T-cell (primary cell): ENCODE measurements at regions of chr1 and their contacts with region 1.

Region 1: GRCh38 chr1:54406339-54407153 is at the start of gene SSBP3:
- DNase-seq: peak; percentile 84 to 96 (median 90)
- ATAC-seq: peak; percentile 93 to 96 (median 95)
- H3K4me3 ChIP-seq: peak within 1 kb of the TSS; percentile 76 to 87
- H3K4me3 Mint-ChIP-seq: peak within 1 kb of the TSS; percentile 90 to 92 (median 91)
- H3K27ac ChIP-seq: peak within 1 kb of the TSS; percentile 70
- H3K27ac Mint-ChIP-seq: peak within 1 kb of the TSS; percentile 86 to 97
- H3K4me1 ChIP-seq: peaks cover 29 to 70% of the 10 kb centered on the region in 2 experiments
- H3K4me1 Mint-ChIP-seq: peaks cover 59 to 72% (median 70%) of the 10 kb centered on the region in 3 donors
- H3K27me3 ChIP-seq: no peaks in the 10 kb centered on the region
- H3K27me3 Mint-ChIP-seq: no peaks in the 10 kb centered on the region
- total RNA-seq, gene SSBP3: 51.5 to 84.5 (median 69.2) TPM

Region 2: GRCh38 chr1:53716150-53716549 is 690.4 kb before region 1 on chr1:
- CTCF ChIA-PET with region 1: interaction called in 1 of 2 experiments, 11 read pairs
- POLR2A ChIA-PET with region 1: no interaction called
- DNase-seq: no peak
- ATAC-seq: no peak
- H3K4me3 ChIP-seq: no peak overlapping the region
- H3K4me3 Mint-ChIP-seq: no peak overlapping the region
- H3K27ac ChIP-seq: no peak overlapping the region
- H3K27ac Mint-ChIP-seq: no peak overlapping the region
- H3K4me1 ChIP-seq: no peaks in the 10 kb centered on the region
- H3K4me1 Mint-ChIP-seq: no peaks in the 10 kb centered on the region
- H3K27me3 ChIP-seq: peaks cover 0 to 31% of the 10 kb centered on the region in 2 experiments
- H3K27me3 Mint-ChIP-seq: peaks cover 8 to 9% of the 10 kb centered on the region in 2 donors

Region 3: DNA sequence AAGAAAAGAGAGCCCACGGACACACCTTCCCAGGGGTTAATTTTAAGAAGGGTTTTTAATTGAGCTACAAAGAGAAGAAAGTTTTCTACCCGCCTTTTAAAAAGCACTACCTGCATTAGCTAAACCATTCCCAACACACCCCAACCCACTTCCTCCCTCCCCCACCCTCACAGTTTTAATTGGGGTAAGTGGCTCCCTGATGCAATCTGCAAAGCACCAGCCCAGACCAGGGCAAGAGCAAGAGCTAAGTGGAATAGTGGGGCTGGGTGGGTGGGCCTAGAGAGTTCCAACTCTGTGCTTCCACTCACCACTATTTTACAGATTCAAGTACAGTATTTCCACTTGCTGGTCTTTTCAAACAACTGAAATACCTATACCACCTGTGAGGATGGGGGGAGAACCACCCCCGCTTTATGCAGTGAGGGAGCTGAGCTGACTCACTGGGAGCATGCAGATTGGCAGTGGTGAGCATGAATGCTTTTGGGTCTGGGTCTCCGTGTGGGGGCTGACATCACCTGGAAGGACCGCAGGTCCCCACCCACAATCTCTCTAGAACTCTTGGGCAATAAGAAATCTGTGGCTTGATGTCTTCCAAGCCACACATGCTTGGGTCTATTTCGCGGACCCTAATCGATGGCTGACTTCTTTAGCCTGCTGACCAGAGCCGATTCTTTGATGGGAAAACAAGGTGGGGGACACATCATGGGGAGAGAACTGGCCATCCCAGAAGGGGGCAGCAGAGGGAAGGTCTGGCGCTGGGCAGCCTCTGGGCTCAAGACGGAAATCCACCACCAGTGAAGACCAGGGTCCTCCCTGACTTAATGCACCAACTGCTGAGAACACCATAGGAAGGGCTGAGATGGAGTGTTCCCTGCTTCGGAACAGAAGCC is 95.9 kb before region 1 on chr1:
- CTCF ChIA-PET with region 1: no interaction called
- POLR2A ChIA-PET with region 1: no interaction called
- DNase-seq: peak in 1 of 35 experiments; percentile 15
- ATAC-seq: peak; percentile 41 to 73 (median 64)
- H3K4me3 ChIP-seq: no peak overlapping the region
- H3K4me3 Mint-ChIP-seq: peak overlapping the region in 2 of 3 donors; percentile 47 to 65
- H3K27ac ChIP-seq: no peak overlapping the region
- H3K27ac Mint-ChIP-seq: peak overlapping the region; percentile 72 to 84
- H3K4me1 ChIP-seq: peaks cover 40 to 71% of the 10 kb centered on the region in 2 experiments
- H3K4me1 Mint-ChIP-seq: peaks cover 78 to 87% (median 86%) of the 10 kb centered on the region in 3 donors
- H3K27me3 ChIP-seq: no peaks in the 10 kb centered on the region
- H3K27me3 Mint-ChIP-seq: no peaks in the 10 kb centered on the region